HepG2 (cell line): ENCODE measurements at regions of chr16 and their contacts with region 1.

Region 1: DNA sequence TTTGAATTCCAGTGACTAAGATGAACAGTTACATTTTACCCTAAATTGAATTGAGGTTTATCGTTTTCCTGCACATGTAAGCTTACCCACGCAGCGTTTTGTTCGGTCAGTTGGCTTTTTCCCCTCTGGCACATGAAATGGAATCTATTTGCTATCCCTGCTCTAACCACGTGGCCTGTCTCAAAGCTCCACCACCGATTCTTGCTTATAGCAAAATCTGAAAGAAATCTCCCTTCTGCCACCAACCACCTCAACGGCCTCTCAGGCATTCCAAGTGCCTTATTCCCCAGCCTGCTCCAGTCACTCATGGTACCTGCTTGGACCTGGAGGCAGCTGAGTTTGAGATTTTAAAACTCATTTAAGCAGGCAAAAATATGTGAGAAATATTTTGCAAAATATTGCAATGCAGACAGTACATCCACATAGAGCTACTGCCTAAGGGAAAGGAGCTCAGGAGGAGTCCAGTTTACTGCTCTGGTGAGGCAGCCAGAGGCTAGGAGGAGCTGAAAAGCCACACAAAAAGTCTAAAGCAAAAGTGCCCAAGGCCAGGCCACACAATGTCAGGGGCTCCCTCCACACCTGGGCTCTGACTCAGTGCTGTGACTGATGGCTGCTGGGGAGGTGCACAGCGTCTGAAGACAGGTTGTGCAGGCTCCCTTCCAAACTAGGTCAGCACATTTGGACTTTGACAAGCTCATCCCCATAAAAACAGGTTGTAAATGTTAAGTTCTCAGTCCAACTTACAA is 26.4 kb downstream of the ARHGAP17 start:
- DNase-seq: peak; percentile 75
- ATAC-seq: peak; percentile 74
- H3K4me3 ChIP-seq: peak overlapping the region in 2 of 3 experiments; percentile 14 to 40; a peak in 2 of 6 replicates
- H3K27ac ChIP-seq: peak overlapping the region; percentile 78
- H3K4me1 ChIP-seq: peaks cover 93% of the 10 kb centered on the region
- H3K27me3 ChIP-seq: no peaks in the 10 kb centered on the region
- CTCF ChIP-seq: no peak
- EP300 ChIP-seq: peak in 1 of 2 experiments; percentile 17; a peak in 1 of 4 replicates
- POLR2A ChIP-seq: no peak
- RAD21 ChIP-seq: no peak

Region 2: DNA sequence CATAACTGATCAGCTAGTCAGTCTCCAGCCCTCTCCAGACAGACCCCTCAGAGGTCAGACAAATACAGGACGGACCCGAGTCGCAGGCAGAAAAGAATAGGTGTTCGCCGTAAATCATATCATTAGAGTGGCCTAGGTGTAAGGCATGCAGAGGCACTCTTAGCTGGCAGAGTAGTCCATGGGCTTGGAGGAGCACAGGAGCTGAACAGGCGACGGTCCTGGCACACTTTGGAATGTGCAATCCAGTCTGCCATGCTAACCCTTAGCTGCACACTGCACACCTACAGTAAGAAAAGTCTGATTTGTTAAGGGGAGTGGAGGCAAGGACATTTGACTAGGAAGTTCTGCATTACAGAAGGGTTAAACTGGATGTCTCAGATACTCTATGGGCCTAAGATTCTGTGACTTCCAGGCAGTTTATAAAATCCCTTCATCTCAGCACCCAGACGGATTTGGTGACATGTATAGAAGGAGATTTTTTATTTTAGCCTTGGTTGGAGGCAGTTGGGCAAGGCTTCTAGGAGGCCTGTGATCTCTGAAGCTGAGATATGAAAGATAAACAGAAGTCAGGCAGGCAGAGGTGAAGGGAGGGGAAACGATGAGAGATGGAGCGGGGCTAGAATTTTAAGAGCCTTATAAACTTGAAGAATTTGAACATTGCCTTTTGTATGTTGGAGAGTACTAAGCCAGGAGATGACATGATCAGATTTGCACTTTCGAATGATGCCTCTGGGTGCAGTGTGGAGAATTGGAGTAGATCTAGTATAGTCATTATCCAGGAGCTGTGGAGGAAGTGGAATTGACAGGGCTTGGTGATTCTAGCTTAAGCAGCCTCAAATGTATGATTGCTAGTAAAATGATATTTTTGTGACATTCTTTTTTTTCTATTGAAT is 177.6 kb before region 1 on chr16:
- CTCF ChIA-PET with region 1: no interaction called
- POLR2A ChIA-PET with region 1: no interaction called
- in situ Hi-C with region 1: no loop called
- intact Hi-C with region 1: no loop called
- DNase-seq: no peak
- ATAC-seq: peak; percentile 67
- H3K4me3 ChIP-seq: no peak overlapping the region
- H3K27ac ChIP-seq: no peak overlapping the region
- H3K4me1 ChIP-seq: no peaks in the 10 kb centered on the region
- H3K27me3 ChIP-seq: no peaks in the 10 kb centered on the region
- CTCF ChIP-seq: no peak
- EP300 ChIP-seq: no peak
- POLR2A ChIP-seq: no peak
- RAD21 ChIP-seq: no peak

Region 3: GRCh38 chr16:24896439-24896838 is 92.3 kb before region 1 on chr16:
- CTCF ChIA-PET with region 1: no interaction called
- POLR2A ChIA-PET with region 1: no interaction called
- in situ Hi-C with region 1: no loop called
- intact Hi-C with region 1: no loop called
- DNase-seq: no peak
- ATAC-seq: no peak
- H3K4me3 ChIP-seq: no peak overlapping the region
- H3K27ac ChIP-seq: no peak overlapping the region
- H3K4me1 ChIP-seq: no peaks in the 10 kb centered on the region
- H3K27me3 ChIP-seq: no peaks in the 10 kb centered on the region
- CTCF ChIP-seq: no peak
- EP300 ChIP-seq: no peak
- POLR2A ChIP-seq: no peak
- RAD21 ChIP-seq: no peak

Region 4: GRCh38 chr16:24999856-25000461 is 11.2 kb after region 1 on chr16:
- CTCF ChIA-PET with region 1: no interaction called
- POLR2A ChIA-PET with region 1: interaction called, 13 read pairs
- in situ Hi-C with region 1: no loop called
- intact Hi-C with region 1: no loop called
- DNase-seq: peak; percentile 89
- ATAC-seq: peak; percentile 94
- H3K4me3 ChIP-seq: peak overlapping the region; percentile 4 to 47 (median 5); a peak in 3 of 6 replicates
- H3K27ac ChIP-seq: peak overlapping the region; percentile 72
- H3K4me1 ChIP-seq: peaks cover 76% of the 10 kb centered on the region
- H3K27me3 ChIP-seq: no peaks in the 10 kb centered on the region
- CTCF ChIP-seq: no peak
- EP300 ChIP-seq: peak in 1 of 2 experiments; percentile 33; a peak in 1 of 4 replicates
- POLR2A ChIP-seq: peak in 1 of 2 experiments; percentile 56; a peak in 1 of 4 replicates
- RAD21 ChIP-seq: peak; percentile 4; the same call in 1 of the 2 replicates

Region 5: GRCh38 chr16:25093208-25094061 is 104.7 kb after region 1 on chr16:
- CTCF ChIA-PET with region 1: no interaction called
- POLR2A ChIA-PET with region 1: no interaction called
- in situ Hi-C with region 1: no loop called
- intact Hi-C with region 1: no loop called
- DNase-seq: no peak
- ATAC-seq: no peak
- H3K4me3 ChIP-seq: no peak overlapping the region
- H3K27ac ChIP-seq: no peak overlapping the region
- H3K4me1 ChIP-seq: no peaks in the 10 kb centered on the region
- H3K27me3 ChIP-seq: peaks cover 2 to 36% of the 10 kb centered on the region in 2 experiments; a peak in 4 of 5 replicates
- CTCF ChIP-seq: no peak
- EP300 ChIP-seq: no peak
- POLR2A ChIP-seq: no peak
- RAD21 ChIP-seq: no peak